GM12878 (cell line): ENCODE measurements at regions of chr11 and their contacts with region 1.

Region 1: DNA sequence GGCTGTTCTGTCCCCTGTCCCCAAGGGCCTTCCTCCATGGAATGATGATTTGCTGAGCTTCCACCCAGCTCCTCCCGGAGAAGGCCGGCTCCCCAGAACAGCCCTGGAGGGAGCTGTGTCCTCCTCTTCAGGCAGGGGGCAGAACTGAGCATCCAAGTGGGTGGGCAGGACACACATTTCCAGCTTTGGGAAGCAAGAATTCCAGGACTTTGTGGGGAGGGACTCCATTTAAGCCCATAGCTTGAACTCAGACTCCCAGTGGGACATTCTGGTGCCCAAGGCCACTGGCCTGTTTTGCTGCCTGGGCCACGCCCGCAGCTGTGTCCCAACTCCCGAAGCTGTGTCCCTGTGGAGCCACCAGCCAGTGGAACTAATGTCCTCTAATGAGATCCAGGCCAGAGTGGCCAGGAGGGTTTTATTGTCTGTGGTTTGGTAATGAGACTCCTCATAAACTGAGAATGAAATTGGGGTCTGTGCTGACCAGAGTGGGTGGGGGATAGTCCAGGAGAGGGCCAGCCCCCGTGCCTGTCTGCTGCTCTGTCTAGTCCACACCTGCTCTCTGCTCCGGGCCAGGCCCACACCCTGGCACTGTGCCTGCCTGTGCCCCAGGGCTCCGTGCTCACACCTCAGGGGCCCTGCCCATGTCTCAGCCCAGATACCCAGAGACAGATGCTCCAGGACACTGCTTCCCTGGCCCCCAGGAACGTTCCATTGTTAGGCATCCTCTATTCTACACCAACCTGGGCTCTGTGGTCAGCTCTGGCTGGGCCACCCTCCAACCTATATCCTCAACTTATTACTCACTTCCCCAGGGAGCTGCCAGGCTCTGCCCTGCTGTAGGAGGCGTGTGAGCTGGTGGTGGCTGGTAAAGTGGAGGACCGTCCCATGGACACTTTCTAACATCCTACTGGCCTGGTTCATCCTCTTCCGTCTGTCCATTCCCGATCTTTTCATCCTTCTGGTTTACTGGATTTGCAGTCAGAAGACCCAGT is 7.6 kb downstream of the NECTIN1 start:
- DNase-seq: no peak
- ATAC-seq: no peak; the same call in 2 of the 3 replicates
- H3K4me3 ChIP-seq: no peak overlapping the region
- H3K27ac ChIP-seq: no peak overlapping the region
- H3K4me1 ChIP-seq: peaks cover 15% of the 10 kb centered on the region
- H3K27me3 ChIP-seq: no peaks in the 10 kb centered on the region
- CTCF ChIP-seq: peak; percentile 23 to 39 (median 36); a peak in 4 of 6 replicates
- EP300 ChIP-seq: no peak
- POLR2A ChIP-seq: no peak
- RAD21 ChIP-seq: no peak

Region 2: DNA sequence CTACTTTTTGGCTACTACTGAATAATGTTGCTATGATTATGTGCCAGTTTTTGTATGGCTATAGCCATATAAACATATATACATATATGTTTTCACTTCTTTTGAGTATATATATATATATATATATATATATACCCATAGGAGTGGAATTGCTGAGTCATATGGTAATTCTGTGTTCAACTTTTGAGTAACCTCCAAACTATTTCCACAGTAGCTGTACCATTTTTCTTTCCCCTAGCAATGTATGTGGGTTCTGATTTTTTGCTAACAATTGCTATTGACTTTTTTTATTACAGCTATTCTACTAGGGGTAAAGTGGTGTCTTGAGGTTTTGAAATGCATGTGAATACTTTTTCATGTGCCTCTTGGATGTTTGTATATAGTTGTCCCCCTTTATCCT is 484.9 kb before region 1 on chr11:
- CTCF ChIA-PET with region 1: no interaction called
- POLR2A ChIA-PET with region 1: no interaction called
- RAD21 ChIA-PET with region 1: no interaction called
- SMC1A ChIA-PET with region 1: no interaction called
- in situ Hi-C with region 1: no loop called
- intact Hi-C with region 1: no loop called
- DNase-seq: no peak
- ATAC-seq: no peak; the same call in 2 of the 3 replicates
- H3K4me3 ChIP-seq: no peak overlapping the region
- H3K27ac ChIP-seq: no peak overlapping the region
- H3K4me1 ChIP-seq: peaks cover 32% of the 10 kb centered on the region
- H3K27me3 ChIP-seq: no peaks in the 10 kb centered on the region
- CTCF ChIP-seq: no peak
- EP300 ChIP-seq: no peak
- POLR2A ChIP-seq: no peak
- RAD21 ChIP-seq: no peak

Region 3: DNA sequence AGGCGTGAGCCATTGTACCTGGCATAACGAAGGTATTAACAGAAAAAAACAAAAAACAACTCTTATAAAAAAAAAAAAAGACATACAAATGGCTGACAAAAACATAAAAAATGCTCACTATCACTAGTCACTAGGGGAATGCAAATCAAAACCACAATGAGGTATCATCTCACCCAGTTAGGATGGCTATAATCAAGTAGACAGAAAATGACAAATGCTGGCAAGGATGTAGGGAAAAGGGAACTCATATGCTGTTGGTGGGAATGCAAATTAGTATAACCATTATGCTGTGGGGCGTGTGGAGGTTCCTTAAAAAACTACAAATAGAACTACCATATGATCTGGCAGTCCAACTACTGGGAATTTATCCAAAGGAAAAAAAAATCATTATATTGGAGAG is 315.4 kb before region 1 on chr11:
- CTCF ChIA-PET with region 1: no interaction called
- POLR2A ChIA-PET with region 1: no interaction called
- RAD21 ChIA-PET with region 1: no interaction called
- SMC1A ChIA-PET with region 1: no interaction called
- in situ Hi-C with region 1: no loop called
- intact Hi-C with region 1: no loop called
- DNase-seq: no peak
- ATAC-seq: no peak
- H3K4me3 ChIP-seq: no peak overlapping the region
- H3K27ac ChIP-seq: no peak overlapping the region
- H3K4me1 ChIP-seq: no peaks in the 10 kb centered on the region
- H3K27me3 ChIP-seq: no peaks in the 10 kb centered on the region
- CTCF ChIP-seq: no peak
- EP300 ChIP-seq: no peak
- POLR2A ChIP-seq: no peak
- RAD21 ChIP-seq: no peak

Region 4: DNA sequence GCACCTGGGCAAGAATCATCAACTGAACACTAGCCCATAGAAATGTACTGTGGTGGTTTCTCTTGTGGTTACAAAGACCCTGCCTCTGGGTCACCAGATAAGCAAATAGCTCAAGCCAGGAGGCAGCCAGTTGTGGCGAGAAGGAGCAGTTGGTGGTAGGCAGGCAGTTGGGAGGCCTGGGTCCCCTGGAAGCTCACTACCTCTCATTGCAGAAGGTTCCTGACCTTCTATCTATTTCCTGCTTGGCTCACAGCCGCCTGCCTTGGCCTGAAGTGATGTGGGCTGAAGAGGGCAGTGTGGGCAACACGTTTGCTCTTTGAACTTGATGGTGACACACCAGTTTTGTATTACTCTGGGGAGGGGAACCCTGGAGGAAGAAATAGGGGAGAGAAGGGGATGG is 27.1 kb before region 1 on chr11:
- CTCF ChIA-PET with region 1: interaction called, 57 read pairs
- POLR2A ChIA-PET with region 1: interaction called, 4 read pairs
- RAD21 ChIA-PET with region 1: interaction called, 12 read pairs
- SMC1A ChIA-PET with region 1: interaction called, 5 read pairs
- in situ Hi-C with region 1: no loop called
- intact Hi-C with region 1: no loop called
- DNase-seq: no peak
- ATAC-seq: peak; percentile 71
- H3K4me3 ChIP-seq: no peak overlapping the region
- H3K27ac ChIP-seq: no peak overlapping the region
- H3K4me1 ChIP-seq: peaks cover 25% of the 10 kb centered on the region
- H3K27me3 ChIP-seq: no peaks in the 10 kb centered on the region
- CTCF ChIP-seq: peak; percentile 17 to 39 (median 32); a peak in 4 of 6 replicates
- EP300 ChIP-seq: no peak
- POLR2A ChIP-seq: no peak
- RAD21 ChIP-seq: no peak